ENCODE measurements at regions of chr1 and their contacts with region 1.

Region 1: DNA sequence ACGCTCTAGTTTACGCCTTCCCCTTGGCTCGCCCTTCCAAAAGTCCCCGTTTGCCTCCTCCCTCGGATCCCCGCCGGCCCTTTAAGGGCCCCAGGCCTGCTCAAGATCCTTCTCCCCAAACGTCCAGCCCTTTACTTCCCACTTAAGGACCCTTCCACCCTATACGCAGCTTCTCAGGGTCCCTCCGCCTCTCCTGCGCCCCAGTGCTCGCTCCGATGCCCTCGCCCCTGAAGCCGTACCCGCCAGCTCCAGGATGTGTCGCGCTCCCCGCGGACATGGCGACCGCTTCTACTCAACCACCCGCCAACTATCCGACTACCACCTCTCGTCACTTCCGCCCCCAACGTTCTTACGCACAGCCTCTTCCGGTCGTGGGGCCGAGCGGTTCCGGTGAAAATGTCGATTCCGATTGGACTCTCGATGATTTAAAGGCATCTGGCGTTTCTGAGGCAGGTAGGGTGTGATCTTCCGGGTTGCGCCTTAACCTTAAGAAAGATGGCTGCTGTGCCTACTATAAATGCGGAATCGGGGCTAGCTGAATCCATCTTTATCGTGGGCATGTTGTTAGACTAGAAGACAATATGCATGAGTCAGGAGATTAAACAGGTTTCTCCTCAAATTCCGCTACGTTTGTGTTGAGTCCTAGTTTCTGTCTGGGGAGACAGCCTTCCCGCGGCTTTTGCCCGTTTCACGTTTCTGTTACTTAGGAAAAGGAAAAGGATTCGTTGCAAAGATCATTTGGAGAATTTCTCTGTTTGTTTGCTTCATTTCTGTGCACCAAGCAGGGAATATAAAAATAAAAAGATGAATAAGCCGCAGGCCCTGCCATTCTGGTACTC is at the start of gene KHDC4:
- DNase-seq: peak; percentile 97
- H3K4me3 Mint-ChIP-seq: no peak within 1 kb of the TSS
- H3K27ac Mint-ChIP-seq: no peak within 1 kb of the TSS
- H3K4me1 Mint-ChIP-seq: peaks cover 42% of the 10 kb centered on the region
- H3K27me3 Mint-ChIP-seq: no peaks in the 10 kb centered on the region
- total RNA-seq, gene KHDC4: 66.1 to 70.2 TPM

Region 2: GRCh38 chr1:155859234-155859829 is 75.0 kb before region 1 on chr1 and contains the start of gene SYT11:
- CTCF ChIA-PET with region 1: no interaction called
- POLR2A ChIA-PET with region 1: interaction called, 12 read pairs
- intact Hi-C with region 1: loop called (anchors 1 kb)
- DNase-seq: peak; percentile 97
- H3K4me3 Mint-ChIP-seq: peak within 1 kb of the TSS; percentile 99
- H3K27ac Mint-ChIP-seq: peak within 1 kb of the TSS; percentile 93
- H3K4me1 Mint-ChIP-seq: peaks cover 45% of the 10 kb centered on the region
- H3K27me3 Mint-ChIP-seq: no peaks in the 10 kb centered on the region
- total RNA-seq, gene SYT11: 25.0 to 25.1 TPM

Region 3: GRCh38 chr1:155946633-155947219 is 12.4 kb after region 1 on chr1:
- CTCF ChIA-PET with region 1: interaction called, 15 read pairs
- POLR2A ChIA-PET with region 1: interaction called, 17 read pairs
- intact Hi-C with region 1: loop called (anchors 1 kb)
- DNase-seq: no peak
- H3K4me3 Mint-ChIP-seq: peak overlapping the region; percentile 65
- H3K27ac Mint-ChIP-seq: peak overlapping the region; percentile 98
- H3K4me1 Mint-ChIP-seq: peaks cover 50% of the 10 kb centered on the region
- H3K27me3 Mint-ChIP-seq: no peaks in the 10 kb centered on the region

Region 4: GRCh38 chr1:155989242-155990004 is 55.1 kb after region 1 on chr1:
- CTCF ChIA-PET with region 1: interaction called, 92 read pairs
- POLR2A ChIA-PET with region 1: interaction called, 9 read pairs
- intact Hi-C with region 1: loop called (anchors 1 kb)
- DNase-seq: peak; percentile 88
- H3K4me3 Mint-ChIP-seq: no peak overlapping the region
- H3K27ac Mint-ChIP-seq: no peak overlapping the region
- H3K4me1 Mint-ChIP-seq: peaks cover 6% of the 10 kb centered on the region
- H3K27me3 Mint-ChIP-seq: no peaks in the 10 kb centered on the region

Region 5: DNA sequence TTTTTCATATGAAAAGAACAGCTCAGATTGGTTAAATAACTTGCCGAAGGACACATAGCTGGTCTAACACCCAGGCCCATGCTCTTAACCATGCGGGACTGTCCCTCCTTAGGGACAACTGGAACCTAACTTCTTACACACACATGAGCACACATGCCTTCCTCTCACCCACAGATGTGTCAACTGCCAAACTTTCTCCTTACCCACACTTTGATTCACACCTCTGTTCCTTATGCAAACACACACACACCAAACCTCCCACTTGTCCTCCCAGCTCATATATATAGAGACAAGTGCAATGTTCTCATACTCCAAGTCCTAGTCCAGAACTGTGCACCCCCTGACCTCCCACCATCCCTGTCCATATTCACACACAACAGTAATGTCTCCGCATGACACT is 130.9 kb after region 1 on chr1:
- CTCF ChIA-PET with region 1: interaction called, 23 read pairs
- POLR2A ChIA-PET with region 1: no interaction called
- intact Hi-C with region 1: loop called (anchors 1 kb)
- DNase-seq: no peak
- H3K4me3 Mint-ChIP-seq: no peak overlapping the region
- H3K27ac Mint-ChIP-seq: no peak overlapping the region
- H3K4me1 Mint-ChIP-seq: peaks cover 20% of the 10 kb centered on the region
- H3K27me3 Mint-ChIP-seq: no peaks in the 10 kb centered on the region

Region 6: GRCh38 chr1:156245451-156246232 is 311.3 kb after region 1 on chr1:
- CTCF ChIA-PET with region 1: no interaction called
- POLR2A ChIA-PET with region 1: no interaction called
- intact Hi-C with region 1: no loop called
- DNase-seq: peak; percentile 54
- H3K4me3 Mint-ChIP-seq: peak overlapping the region; percentile 70
- H3K27ac Mint-ChIP-seq: no peak overlapping the region
- H3K4me1 Mint-ChIP-seq: peaks cover 5% of the 10 kb centered on the region
- H3K27me3 Mint-ChIP-seq: no peaks in the 10 kb centered on the region

Measured in activated CD4-positive, alpha-beta memory T cell treated with anti-CD3 and anti-CD28 coated beads for 36 hours (primary cell).